ENCODE measurements at regions of chr14 and their contacts with region 1.

Region 1: DNA sequence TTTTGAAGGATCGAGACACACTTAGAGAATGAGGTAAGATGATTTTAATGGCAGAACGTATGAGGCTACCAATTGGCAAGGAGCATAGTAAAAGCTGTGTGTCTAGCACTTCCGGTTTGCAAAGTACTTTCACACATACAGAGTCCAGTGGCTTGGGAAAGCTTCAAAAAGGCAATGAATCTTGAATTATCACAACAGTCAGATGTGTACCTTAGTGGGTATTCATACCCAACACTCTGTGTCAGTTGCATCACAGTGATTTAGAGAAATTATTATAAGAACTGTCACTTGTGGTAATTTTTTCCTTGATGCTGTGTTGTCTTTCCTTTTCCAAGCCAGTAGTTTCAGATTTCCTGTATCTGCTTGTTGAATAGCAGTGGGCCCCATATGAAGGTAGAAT is 424.1 kb downstream of the PCNX1 start:
- DNase-seq: no peak
- H3K4me3 ChIP-seq: no peak overlapping the region
- H3K27ac ChIP-seq: no peak overlapping the region
- H3K4me1 ChIP-seq: no peaks in the 10 kb centered on the region
- H3K27me3 ChIP-seq: no peaks in the 10 kb centered on the region
- CTCF ChIP-seq: no peak
- POLR2A ChIP-seq: no peak

Region 2: DNA sequence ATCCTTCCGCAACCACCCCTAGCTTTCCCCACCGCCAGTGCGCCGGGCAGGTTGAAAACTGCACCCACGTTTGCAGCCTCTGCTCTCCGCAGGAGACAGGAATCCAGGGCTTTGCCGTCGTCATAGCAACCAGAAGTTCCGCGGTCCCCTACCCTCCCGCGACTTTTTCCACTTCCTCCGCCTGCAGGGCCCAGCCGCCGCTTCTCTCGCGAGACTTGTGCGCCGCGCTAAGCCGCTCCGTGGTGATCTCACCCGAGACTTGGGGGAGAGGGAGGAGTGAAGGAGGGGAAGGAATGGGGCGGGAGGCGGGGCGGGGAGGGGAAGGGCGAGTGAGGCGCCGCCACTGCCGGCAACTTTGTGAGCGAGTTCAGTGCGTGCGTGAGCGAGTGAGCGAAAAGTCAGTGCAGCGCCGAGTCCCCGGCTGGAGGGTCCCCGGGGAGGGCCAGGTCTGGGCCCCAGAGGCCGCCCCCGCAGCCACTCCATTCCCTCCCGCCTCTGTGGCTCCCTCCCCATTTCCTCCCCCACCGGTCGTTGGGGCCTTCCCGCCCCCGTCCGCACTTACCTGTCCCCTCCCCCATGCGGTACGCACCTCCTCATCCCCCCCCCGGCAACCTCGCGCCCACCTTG is 11.2 kb before region 1 on chr14:
- CTCF ChIA-PET with region 1: no interaction called
- POLR2A ChIA-PET with region 1: no interaction called
- dilution Hi-C with region 1: no loop called
- intact Hi-C with region 1: no loop called
- DNase-seq: peak; percentile 99
- H3K4me3 ChIP-seq: peak within 1 kb of the TSS; percentile 78 to 94 (median 89)
- H3K27ac ChIP-seq: peak within 1 kb of the TSS; percentile 74
- H3K4me1 ChIP-seq: peaks cover 11% of the 10 kb centered on the region
- H3K27me3 ChIP-seq: no peaks in the 10 kb centered on the region
- CTCF ChIP-seq: no peak
- POLR2A ChIP-seq: peak; percentile 91

Region 3: GRCh38 chr14:71346685-71347084 is 15.3 kb after region 1 on chr14:
- CTCF ChIA-PET with region 1: no interaction called
- POLR2A ChIA-PET with region 1: no interaction called
- dilution Hi-C with region 1: no loop called
- intact Hi-C with region 1: loop called (anchors 1 kb)
- DNase-seq: no peak
- H3K4me3 ChIP-seq: no peak overlapping the region
- H3K27ac ChIP-seq: no peak overlapping the region
- H3K4me1 ChIP-seq: no peaks in the 10 kb centered on the region
- H3K27me3 ChIP-seq: no peaks in the 10 kb centered on the region
- CTCF ChIP-seq: no peak
- POLR2A ChIP-seq: no peak

Measured in endothelial cell of umbilical vein (primary cell).